ENCODE measurements at regions of chr19 and their contacts with region 1.

Region 1: GRCh38 chr19:3275583-3276340 is 51.3 kb downstream of the CELF5 start:
- DNase-seq: peak; percentile 93 to 97
- H3K4me3 ChIP-seq: peak overlapping the region; percentile 41 to 84 (median 52)
- H3K27ac ChIP-seq: no peak overlapping the region
- H3K4me1 ChIP-seq: peaks cover 2 to 10% (median 5%) of the 10 kb centered on the region in 4 experiments; a peak in 6 of 7 replicates
- H3K27me3 ChIP-seq: no peaks in the 10 kb centered on the region; a peak in 2 of 7 replicates
- CTCF ChIP-seq: peak in 1 of 3 experiments; percentile 88; a peak in 1 of 4 replicates
- EP300 ChIP-seq: no peak
- POLR2A ChIP-seq: no peak
- RAD21 ChIP-seq: no peak

Region 2: DNA sequence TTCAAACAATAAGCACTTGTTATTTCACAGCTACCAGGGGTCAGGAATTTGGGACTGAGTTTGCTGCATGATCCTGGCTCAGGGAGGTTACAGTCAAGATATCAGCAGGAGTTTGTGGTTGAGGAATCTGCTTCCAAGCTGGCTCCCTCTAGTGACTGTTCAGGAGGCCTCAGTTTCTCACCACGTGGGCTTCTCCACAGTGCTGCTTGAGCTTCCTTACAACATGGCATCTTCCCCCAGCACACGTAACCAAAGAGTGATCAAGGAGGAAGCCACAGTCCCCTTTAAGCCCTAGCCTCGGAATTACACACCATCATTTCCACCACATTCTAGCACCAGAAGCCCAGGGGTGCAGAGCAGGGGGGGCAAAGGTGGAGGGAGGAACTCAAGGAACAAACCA is 22.5 kb before region 1 on chr19:
- CTCF ChIA-PET with region 1: interaction called, 12 read pairs
- POLR2A ChIA-PET with region 1: interaction called, 3 read pairs
- DNase-seq: no peak
- H3K4me3 ChIP-seq: no peak overlapping the region
- H3K27ac ChIP-seq: no peak overlapping the region
- H3K4me1 ChIP-seq: peaks cover 0 to 3% (median 0%) of the 10 kb centered on the region in 4 experiments; a peak in 1 of 7 replicates
- H3K27me3 ChIP-seq: no peaks in the 10 kb centered on the region; a peak in 1 of 7 replicates
- CTCF ChIP-seq: peak in 2 of 3 experiments; percentile 27 to 37; a peak in 2 of 4 replicates
- EP300 ChIP-seq: no peak
- POLR2A ChIP-seq: no peak
- RAD21 ChIP-seq: no peak; a peak in 1 of 4 replicates

Region 3: GRCh38 chr19:3324321-3324856 is 48.6 kb after region 1 on chr19:
- CTCF ChIA-PET with region 1: no interaction called
- POLR2A ChIA-PET with region 1: no interaction called
- DNase-seq: peak in 1 of 2 experiments; percentile 94
- H3K4me3 ChIP-seq: no peak overlapping the region
- H3K27ac ChIP-seq: no peak overlapping the region
- H3K4me1 ChIP-seq: no peaks in the 10 kb centered on the region
- H3K27me3 ChIP-seq: no peaks in the 10 kb centered on the region; a peak in 1 of 7 replicates
- CTCF ChIP-seq: peak; percentile 76 to 93 (median 92)
- EP300 ChIP-seq: no peak
- POLR2A ChIP-seq: no peak
- RAD21 ChIP-seq: peak; percentile 24 to 54; a peak in 3 of 4 replicates